ENCODE measurements at regions of chr4 and their contacts with region 1.

Region 1: GRCh38 chr4:21469438-21470300 is 478.9 kb downstream of the KCNIP4 start:
- DNase-seq: no peak
- ATAC-seq: no peak
- H3K4me3 Mint-ChIP-seq: no peak overlapping the region
- H3K27ac Mint-ChIP-seq: no peak overlapping the region
- H3K4me1 Mint-ChIP-seq: no peaks in the 10 kb centered on the region
- H3K27me3 Mint-ChIP-seq: no peaks in the 10 kb centered on the region

Region 2: GRCh38 chr4:20773144-20773997 is 696.3 kb before region 1 on chr4:
- CTCF ChIA-PET with region 1: interaction called, 11 read pairs
- POLR2A ChIA-PET with region 1: no interaction called
- DNase-seq: peak; percentile 42
- ATAC-seq: peak; percentile 57
- H3K4me3 Mint-ChIP-seq: no peak overlapping the region
- H3K27ac Mint-ChIP-seq: no peak overlapping the region
- H3K4me1 Mint-ChIP-seq: no peaks in the 10 kb centered on the region
- H3K27me3 Mint-ChIP-seq: peaks cover 2% of the 10 kb centered on the region

Region 3: GRCh38 chr4:21858971-21859370 is 389.3 kb after region 1 on chr4:
- CTCF ChIA-PET with region 1: no interaction called
- POLR2A ChIA-PET with region 1: no interaction called
- DNase-seq: no peak
- ATAC-seq: no peak
- H3K4me3 Mint-ChIP-seq: no peak overlapping the region
- H3K27ac Mint-ChIP-seq: no peak overlapping the region
- H3K4me1 Mint-ChIP-seq: no peaks in the 10 kb centered on the region
- H3K27me3 Mint-ChIP-seq: no peaks in the 10 kb centered on the region

Measured in activated CD8-positive, alpha-beta T cell treated with anti-CD3 and anti-CD28 coated beads, Interleukin-2, amount 10 ng/mL, durations not matched to agents 7 days and 5 days (primary cell).